Endothelial cell of umbilical vein (primary cell): ENCODE measurements at regions of chr15 and their contacts with region 1.

Region 1: DNA sequence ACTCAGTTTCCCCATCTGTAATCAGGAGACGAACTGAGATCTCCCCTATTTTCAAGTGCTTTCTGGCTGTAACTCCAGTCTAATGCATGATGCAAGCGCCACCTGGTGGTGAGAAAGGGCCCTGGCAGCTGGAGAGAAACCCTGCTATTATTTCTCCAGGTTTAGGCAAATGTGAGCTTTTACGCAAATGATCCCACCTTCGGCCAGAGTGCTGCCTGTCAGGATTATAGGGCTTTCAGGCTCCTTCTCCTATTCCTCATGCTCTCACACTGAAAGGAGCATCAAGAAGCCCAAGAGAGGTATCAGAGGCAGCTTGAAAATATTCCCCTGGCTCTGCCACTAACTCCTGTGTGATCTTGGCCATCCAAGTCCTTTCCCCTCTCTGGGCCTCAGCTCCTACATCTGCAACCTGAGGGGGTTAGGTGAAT is 93.9 kb upstream of the RASGRF1 start:
- DNase-seq: peak; percentile 56
- H3K4me3 ChIP-seq: no peak overlapping the region
- H3K27ac ChIP-seq: no peak overlapping the region
- H3K4me1 ChIP-seq: no peaks in the 10 kb centered on the region
- H3K27me3 ChIP-seq: no peaks in the 10 kb centered on the region
- CTCF ChIP-seq: peak; percentile 83 to 86
- POLR2A ChIP-seq: no peak

Region 2: GRCh38 chr15:78859971-78860732 is 324.3 kb before region 1 on chr15:
- CTCF ChIA-PET with region 1: no interaction called
- POLR2A ChIA-PET with region 1: no interaction called
- dilution Hi-C with region 1: no loop called
- intact Hi-C with region 1: no loop called
- DNase-seq: peak; percentile 76
- H3K4me3 ChIP-seq: peak overlapping the region; percentile 47 to 83 (median 74)
- H3K27ac ChIP-seq: peak overlapping the region; percentile 61
- H3K4me1 ChIP-seq: peaks cover 5% of the 10 kb centered on the region
- H3K27me3 ChIP-seq: peaks cover 0 to 2% of the 10 kb centered on the region in 2 experiments
- CTCF ChIP-seq: peak; percentile 42 to 44
- POLR2A ChIP-seq: no peak

Region 3: GRCh38 chr15:78909791-78910228 is 274.7 kb before region 1 on chr15:
- CTCF ChIA-PET with region 1: interaction called, 109 read pairs
- POLR2A ChIA-PET with region 1: no interaction called
- dilution Hi-C with region 1: no loop called
- intact Hi-C with region 1: loop called (anchors 1 kb)
- DNase-seq: peak; percentile 52
- H3K4me3 ChIP-seq: no peak overlapping the region
- H3K27ac ChIP-seq: no peak overlapping the region
- H3K4me1 ChIP-seq: no peaks in the 10 kb centered on the region
- H3K27me3 ChIP-seq: no peaks in the 10 kb centered on the region
- CTCF ChIP-seq: peak; percentile 61 to 65
- POLR2A ChIP-seq: no peak

Region 4: DNA sequence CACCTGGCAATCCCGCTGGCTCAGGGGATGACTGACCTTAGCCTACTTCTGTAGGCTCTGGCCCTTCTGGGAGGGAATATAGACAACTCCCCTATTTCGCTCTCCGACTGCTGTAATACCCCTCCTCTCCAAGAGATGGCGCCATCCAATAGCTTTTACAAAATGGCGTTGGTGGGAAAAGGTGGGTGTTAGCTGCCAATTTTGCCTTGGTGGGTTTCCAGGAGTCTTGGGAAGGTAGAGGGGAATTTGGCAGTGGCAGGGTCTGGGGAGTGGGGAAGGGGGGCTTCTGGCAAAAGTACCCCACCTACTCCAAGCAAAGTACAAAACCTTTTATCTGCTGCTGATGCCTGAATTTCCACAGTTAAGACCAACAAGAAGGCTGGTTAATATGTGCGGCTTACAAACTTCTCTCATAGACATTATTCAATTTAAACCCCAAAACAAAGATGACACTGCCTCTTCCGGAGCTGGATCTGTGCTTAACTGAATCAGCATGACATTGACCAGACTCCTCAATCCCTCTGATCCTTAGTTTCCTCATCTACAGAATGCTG is 156.0 kb before region 1 on chr15:
- CTCF ChIA-PET with region 1: interaction called, 390 read pairs
- POLR2A ChIA-PET with region 1: no interaction called
- dilution Hi-C with region 1: no loop called
- intact Hi-C with region 1: loop called (anchors 1 kb)
- DNase-seq: peak; percentile 31
- H3K4me3 ChIP-seq: no peak overlapping the region
- H3K27ac ChIP-seq: no peak overlapping the region
- H3K4me1 ChIP-seq: no peaks in the 10 kb centered on the region
- H3K27me3 ChIP-seq: no peaks in the 10 kb centered on the region
- CTCF ChIP-seq: peak; percentile 78 to 80
- POLR2A ChIP-seq: no peak

Region 5: DNA sequence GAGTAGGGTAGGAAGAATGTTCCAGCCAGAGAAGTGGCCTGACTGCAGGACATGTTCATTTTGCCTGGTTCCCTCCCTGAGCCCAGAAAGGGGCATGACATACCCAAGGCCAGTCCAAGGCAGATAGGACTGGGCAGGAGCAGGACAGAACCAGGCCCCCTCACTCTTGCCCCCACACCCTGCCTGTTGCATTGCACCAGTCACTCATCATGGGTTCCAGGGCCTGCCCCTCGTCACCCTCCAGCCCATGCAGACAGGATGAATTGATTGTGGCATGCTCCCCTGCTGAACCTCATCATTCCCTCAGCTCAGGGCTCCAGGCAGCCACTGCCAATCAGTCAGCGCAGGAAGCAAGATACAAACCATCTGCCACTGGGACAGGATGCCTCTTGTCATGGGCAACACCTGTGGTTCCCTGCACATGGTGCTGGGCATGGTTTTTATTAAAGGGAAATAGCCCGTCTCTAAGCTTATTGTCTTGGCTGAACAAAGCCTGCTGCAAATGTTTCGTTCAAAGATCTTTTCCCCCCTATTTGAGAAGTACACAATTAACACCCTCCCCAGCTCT is 142.8 kb before region 1 on chr15:
- CTCF ChIA-PET with region 1: interaction called, 11 read pairs
- POLR2A ChIA-PET with region 1: no interaction called
- dilution Hi-C with region 1: no loop called
- intact Hi-C with region 1: no loop called
- DNase-seq: no peak
- H3K4me3 ChIP-seq: no peak overlapping the region
- H3K27ac ChIP-seq: no peak overlapping the region
- H3K4me1 ChIP-seq: no peaks in the 10 kb centered on the region
- H3K27me3 ChIP-seq: peaks cover 2 to 4% of the 10 kb centered on the region in 2 experiments
- CTCF ChIP-seq: no peak
- POLR2A ChIP-seq: no peak

Region 6: DNA sequence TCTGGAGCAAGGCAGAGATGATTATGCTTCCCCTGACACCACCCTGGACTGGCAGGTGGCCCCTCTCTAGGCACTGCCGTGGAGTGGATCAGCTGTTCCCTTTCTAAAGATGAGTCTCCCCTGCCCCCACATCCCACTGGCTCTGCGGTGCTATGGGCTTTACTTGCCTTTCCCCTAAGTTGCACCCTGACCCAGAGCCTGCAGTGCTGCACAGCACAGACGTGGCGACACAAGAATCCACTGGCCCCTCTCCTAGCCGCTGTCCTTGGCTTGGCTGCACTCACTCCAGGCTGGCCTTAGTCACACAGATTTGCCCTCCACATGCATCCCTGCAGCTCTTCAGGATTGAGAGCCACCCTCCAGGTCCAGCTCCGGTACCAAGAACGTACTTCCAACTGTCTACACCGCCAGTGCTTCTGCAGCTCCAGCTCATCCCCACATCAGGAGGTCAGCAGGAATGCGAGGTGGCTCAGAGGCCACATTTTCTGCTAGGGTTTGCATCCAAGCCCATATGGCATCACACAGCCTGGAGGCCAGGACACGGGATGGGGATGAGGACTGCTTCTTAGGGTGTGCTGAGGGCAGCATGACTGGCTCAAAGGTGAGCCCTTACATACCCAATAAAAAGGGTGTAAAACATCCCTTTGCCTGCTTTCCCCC is 11.5 kb before region 1 on chr15:
- CTCF ChIA-PET with region 1: interaction called, 14 read pairs
- POLR2A ChIA-PET with region 1: no interaction called
- dilution Hi-C with region 1: no loop called
- intact Hi-C with region 1: no loop called
- DNase-seq: no peak
- H3K4me3 ChIP-seq: no peak overlapping the region
- H3K27ac ChIP-seq: no peak overlapping the region
- H3K4me1 ChIP-seq: no peaks in the 10 kb centered on the region
- H3K27me3 ChIP-seq: no peaks in the 10 kb centered on the region
- CTCF ChIP-seq: no peak
- POLR2A ChIP-seq: no peak

Region 7: GRCh38 chr15:79208179-79208578 is 23.7 kb after region 1 on chr15:
- CTCF ChIA-PET with region 1: interaction called, 15 read pairs
- POLR2A ChIA-PET with region 1: no interaction called
- dilution Hi-C with region 1: no loop called
- intact Hi-C with region 1: no loop called
- DNase-seq: no peak
- H3K4me3 ChIP-seq: no peak overlapping the region
- H3K27ac ChIP-seq: no peak overlapping the region
- H3K4me1 ChIP-seq: no peaks in the 10 kb centered on the region
- H3K27me3 ChIP-seq: peaks cover 0 to 3% of the 10 kb centered on the region in 2 experiments
- CTCF ChIP-seq: no peak
- POLR2A ChIP-seq: no peak